ENCODE measurements at regions of chr19 and their contacts with region 1.

Region 1: DNA sequence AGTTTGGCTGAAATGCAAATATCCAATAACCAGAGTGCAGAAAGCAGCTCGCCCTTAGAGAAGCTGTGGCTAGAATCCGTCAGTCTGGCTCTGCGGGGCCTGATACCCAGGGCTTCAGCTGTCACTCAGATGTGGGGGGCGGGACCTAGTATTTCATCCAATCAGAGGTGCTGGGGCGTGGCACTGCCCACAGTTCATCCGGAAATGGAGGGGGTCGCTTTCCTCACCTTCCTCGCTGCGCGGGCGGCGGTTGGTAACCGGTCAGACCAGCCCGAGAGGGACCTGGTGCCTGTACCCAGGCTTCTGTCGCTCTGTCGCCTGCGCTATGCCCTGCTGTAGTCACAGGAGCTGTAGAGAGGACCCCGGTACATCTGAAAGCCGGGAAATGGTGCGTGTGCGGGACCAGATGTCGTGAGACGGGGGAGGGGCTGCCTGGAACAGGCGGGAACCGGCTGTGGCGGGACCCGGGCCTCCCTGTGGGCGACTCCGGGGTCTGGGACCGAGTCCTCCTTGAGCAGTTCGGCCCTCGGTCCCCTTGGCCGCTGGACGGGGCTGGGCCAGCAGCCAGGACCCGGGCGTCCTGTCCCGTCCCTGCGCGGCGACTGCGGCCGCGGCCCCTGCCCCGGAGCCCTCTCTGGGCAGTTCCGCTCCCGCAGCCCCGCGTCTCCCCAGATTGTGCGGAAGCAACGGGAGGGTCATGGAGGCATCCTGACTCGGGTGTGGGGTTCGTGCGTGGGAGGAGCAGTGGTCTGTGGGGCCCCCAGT is at the start of gene ZNF700:
- DNase-seq: peak; percentile 89
- H3K4me3 ChIP-seq: peak within 1 kb of the TSS; percentile 75 to 91 (median 79)
- H3K27ac ChIP-seq: peak within 1 kb of the TSS; percentile 65
- H3K4me1 ChIP-seq: peaks cover 6% of the 10 kb centered on the region
- H3K27me3 ChIP-seq: no peaks in the 10 kb centered on the region
- CTCF ChIP-seq: no peak
- total RNA-seq, gene ZNF700: 8.2 to 10.4 TPM

Region 2: GRCh38 chr19:11626252-11626651 is 298.8 kb before region 1 on chr19:
- CTCF ChIA-PET with region 1: no interaction called
- dilution Hi-C with region 1: no loop called
- in situ Hi-C with region 1: no loop called
- intact Hi-C with region 1: no loop called
- DNase-seq: no peak
- H3K4me3 ChIP-seq: no peak overlapping the region
- H3K27ac ChIP-seq: no peak overlapping the region
- H3K4me1 ChIP-seq: peaks cover 3% of the 10 kb centered on the region
- H3K27me3 ChIP-seq: no peaks in the 10 kb centered on the region
- CTCF ChIP-seq: no peak

Region 3: GRCh38 chr19:11798391-11799330 is 126.4 kb before region 1 on chr19 and contains the start of gene ZNF491:
- CTCF ChIA-PET with region 1: interaction called, 24 read pairs
- dilution Hi-C with region 1: no loop called
- in situ Hi-C with region 1: no loop called
- intact Hi-C with region 1: loop called (anchors 1 kb)
- DNase-seq: peak; percentile 78
- H3K4me3 ChIP-seq: peak within 1 kb of the TSS; percentile 46 to 63 (median 54)
- H3K27ac ChIP-seq: no peak within 1 kb of the TSS
- H3K4me1 ChIP-seq: peaks cover 4% of the 10 kb centered on the region
- H3K27me3 ChIP-seq: no peaks in the 10 kb centered on the region
- CTCF ChIP-seq: peak in 1 of 2 donors; percentile 21
- total RNA-seq, gene ZNF491: 1.4 to 1.5 TPM

Region 4: DNA sequence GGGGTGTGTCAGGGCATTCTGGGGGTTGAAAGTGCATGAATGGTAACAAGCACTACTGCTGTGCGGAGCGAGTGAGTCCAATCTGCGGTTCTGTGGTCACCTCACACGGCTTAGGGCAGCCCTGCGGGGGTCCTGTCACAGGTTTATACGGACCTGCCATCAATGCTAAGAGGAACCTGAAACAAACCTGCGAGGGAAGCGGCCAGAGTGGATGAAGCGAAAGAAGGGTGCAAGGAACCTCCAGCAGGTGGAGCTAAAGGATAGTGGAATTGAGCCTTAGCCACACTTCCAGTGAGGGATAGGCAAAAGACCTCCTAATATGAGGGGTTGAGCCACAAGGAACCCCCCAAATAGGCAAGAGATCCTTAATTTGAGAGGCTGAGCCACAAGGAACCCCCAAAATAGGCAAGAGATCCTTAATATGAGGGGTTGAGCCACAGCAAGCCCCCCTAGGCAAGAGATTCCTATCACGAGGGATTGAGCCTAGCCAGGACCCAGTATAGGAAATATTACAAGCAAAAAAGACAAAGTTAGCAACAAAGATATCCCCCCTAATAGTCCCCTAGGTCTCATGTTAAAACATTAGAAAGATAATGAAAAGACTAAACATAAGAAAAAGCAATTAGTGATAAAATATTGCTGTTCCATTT is 43.8 kb before region 1 on chr19:
- CTCF ChIA-PET with region 1: no interaction called
- dilution Hi-C with region 1: no loop called
- in situ Hi-C with region 1: no loop called
- intact Hi-C with region 1: loop called (anchors 5 kb)
- DNase-seq: peak; percentile 48
- H3K4me3 ChIP-seq: no peak overlapping the region
- H3K27ac ChIP-seq: no peak overlapping the region
- H3K4me1 ChIP-seq: no peaks in the 10 kb centered on the region
- H3K27me3 ChIP-seq: no peaks in the 10 kb centered on the region
- CTCF ChIP-seq: peak; percentile 38 to 73

Region 5: GRCh38 chr19:11950312-11950711 is 25.2 kb after region 1 on chr19:
- CTCF ChIA-PET with region 1: no interaction called
- dilution Hi-C with region 1: no loop called
- in situ Hi-C with region 1: no loop called
- intact Hi-C with region 1: no loop called
- DNase-seq: no peak
- H3K4me3 ChIP-seq: no peak overlapping the region
- H3K27ac ChIP-seq: no peak overlapping the region
- H3K4me1 ChIP-seq: no peaks in the 10 kb centered on the region
- H3K27me3 ChIP-seq: no peaks in the 10 kb centered on the region
- CTCF ChIP-seq: no peak

Region 6: DNA sequence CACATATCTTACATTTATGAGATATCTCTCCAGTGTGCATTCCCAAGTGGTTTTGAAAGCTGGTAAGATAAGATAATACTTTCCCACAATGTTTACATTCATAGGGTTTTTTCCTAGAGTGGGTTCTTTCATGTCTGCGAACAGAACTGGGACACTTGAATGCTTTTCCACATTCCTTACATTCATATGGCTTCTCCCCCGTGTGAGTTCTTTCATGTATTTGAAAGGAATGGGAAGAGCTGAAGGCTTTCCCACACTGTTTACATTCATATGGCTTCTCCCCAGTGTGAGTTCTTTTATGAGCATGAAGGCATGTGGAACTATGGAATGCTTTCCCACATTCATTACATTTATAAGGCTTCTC is 90.7 kb after region 1 on chr19:
- CTCF ChIA-PET with region 1: no interaction called
- dilution Hi-C with region 1: no loop called
- in situ Hi-C with region 1: no loop called
- intact Hi-C with region 1: no loop called
- DNase-seq: no peak
- H3K4me3 ChIP-seq: no peak overlapping the region
- H3K27ac ChIP-seq: no peak overlapping the region
- H3K4me1 ChIP-seq: no peaks in the 10 kb centered on the region
- H3K27me3 ChIP-seq: no peaks in the 10 kb centered on the region
- CTCF ChIP-seq: no peak

Region 7: GRCh38 chr19:12035220-12036153 is 110.4 kb after region 1 on chr19 and contains the start of gene ZNF433:
- CTCF ChIA-PET with region 1: no interaction called
- dilution Hi-C with region 1: no loop called
- in situ Hi-C with region 1: no loop called
- intact Hi-C with region 1: loop called (anchors 1 kb)
- DNase-seq: peak; percentile 90
- H3K4me3 ChIP-seq: peak within 1 kb of the TSS; percentile 53 to 76 (median 67)
- H3K27ac ChIP-seq: no peak within 1 kb of the TSS
- H3K4me1 ChIP-seq: peaks cover 6% of the 10 kb centered on the region
- H3K27me3 ChIP-seq: no peaks in the 10 kb centered on the region
- CTCF ChIP-seq: no peak
- total RNA-seq, gene ZNF433: 2.7 to 4.5 TPM

Region 8: DNA sequence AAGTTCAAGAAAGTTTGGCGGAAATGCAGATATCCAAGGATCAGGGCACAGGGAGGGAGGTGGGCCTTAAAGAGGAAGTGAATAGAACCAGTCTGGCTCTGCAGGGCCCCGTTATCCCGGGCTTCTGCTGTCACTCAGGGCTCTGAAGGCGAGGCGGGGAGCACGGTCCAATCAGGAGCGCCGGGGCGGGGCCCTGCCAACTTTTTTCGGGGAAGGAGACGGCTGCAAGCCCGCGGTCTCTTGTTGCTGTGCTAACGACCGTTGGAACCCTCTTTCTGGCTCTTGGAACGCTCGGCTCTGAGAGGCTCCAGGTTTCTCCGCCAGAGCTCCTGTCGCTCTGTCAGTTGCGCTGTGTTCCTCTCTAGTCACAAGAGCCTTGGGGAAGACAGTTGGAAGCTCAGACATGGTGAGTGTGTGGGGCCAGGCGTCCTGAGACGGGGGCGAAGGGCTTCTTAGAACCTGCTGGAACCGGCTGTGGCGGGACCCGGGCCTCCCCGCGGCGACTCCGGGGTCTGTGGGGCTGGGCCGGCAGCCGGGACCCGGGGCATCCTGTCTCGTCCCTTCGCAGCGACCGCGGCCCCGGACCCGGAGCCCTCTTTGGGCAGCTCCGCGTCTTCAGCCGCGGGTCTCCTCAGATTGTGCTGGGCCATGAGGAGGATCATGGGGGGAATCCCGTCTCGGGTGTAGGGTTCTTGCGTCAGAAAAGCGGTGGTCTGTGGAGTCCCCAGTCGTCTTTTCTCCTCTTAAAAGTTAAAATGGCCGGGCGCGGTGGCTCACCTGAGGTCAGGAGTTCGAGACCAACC is 167.2 kb after region 1 on chr19:
- CTCF ChIA-PET with region 1: no interaction called
- dilution Hi-C with region 1: no loop called
- in situ Hi-C with region 1: no loop called
- intact Hi-C with region 1: no loop called
- DNase-seq: peak; percentile 10
- H3K4me3 ChIP-seq: peak overlapping the region in 1 of 3 experiments; percentile 25
- H3K27ac ChIP-seq: no peak overlapping the region
- H3K4me1 ChIP-seq: no peaks in the 10 kb centered on the region
- H3K27me3 ChIP-seq: no peaks in the 10 kb centered on the region
- CTCF ChIP-seq: no peak

Region 9: DNA sequence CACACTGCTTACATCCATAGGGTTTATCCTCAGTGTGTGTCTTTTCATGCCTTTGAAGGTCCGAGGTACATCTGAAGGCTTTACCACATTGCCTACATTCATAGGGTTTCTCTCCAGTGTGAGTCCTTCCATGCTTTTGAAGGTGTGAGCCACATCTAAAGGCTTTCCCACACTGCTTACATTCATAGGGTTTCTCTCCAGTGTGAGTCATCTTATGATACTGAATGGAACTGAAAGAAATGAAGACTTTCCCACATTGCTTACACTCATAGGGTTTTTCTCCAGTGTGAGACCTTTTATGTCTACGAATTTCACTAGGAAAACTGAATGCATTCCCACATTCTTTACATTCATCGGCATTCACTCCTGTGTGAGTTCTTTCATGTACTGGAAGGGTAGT is 208.0 kb after region 1 on chr19:
- CTCF ChIA-PET with region 1: no interaction called
- dilution Hi-C with region 1: loop called (anchors 5 kb)
- in situ Hi-C with region 1: no loop called
- intact Hi-C with region 1: no loop called
- DNase-seq: no peak
- H3K4me3 ChIP-seq: no peak overlapping the region
- H3K27ac ChIP-seq: no peak overlapping the region
- H3K4me1 ChIP-seq: no peaks in the 10 kb centered on the region
- H3K27me3 ChIP-seq: no peaks in the 10 kb centered on the region
- CTCF ChIP-seq: no peak

Measured in mammary epithelial cell (primary cell).